GM13977 (cell line): ENCODE measurements at regions of chr18 and their contacts with region 1.

Region 1: GRCh38 chr18:14074187-14074586 is 58.0 kb downstream of the ZNF519 start:
- DNase-seq: no peak
- CTCF ChIP-seq: peak; percentile 20

Region 2: DNA sequence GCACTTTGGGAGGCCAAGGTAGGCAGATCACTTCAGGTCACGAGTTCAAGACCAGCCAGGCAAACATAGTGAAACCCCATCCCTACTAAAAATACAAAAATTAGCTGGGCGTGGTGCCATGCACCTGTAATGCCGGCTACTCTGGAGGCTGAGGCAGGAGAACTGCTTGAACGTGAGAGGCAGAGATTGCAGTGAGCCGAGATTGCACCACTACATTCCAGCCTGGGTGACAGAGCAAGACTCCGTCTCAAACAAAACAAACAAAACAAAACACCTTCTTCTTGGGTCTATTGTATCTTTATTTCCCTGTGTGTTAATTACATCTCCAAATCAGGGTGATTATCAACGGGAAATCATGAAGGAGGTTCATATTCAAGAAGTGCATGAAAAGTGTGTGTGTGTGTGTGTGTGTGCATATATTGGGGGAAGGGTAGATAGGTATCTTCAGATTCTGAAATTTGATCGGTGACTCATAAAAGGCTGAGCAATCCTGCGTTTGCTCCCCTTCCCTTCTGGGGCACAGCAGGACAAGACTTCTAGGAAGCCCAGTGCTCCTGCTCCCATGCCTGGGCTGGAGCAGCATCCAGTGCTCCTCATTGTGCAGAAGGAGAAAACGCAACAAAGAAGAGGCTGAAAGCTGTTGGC is 224.5 kb before region 1 on chr18:
- in situ Hi-C with region 1: loop called (anchors 10 kb)
- DNase-seq: no peak
- CTCF ChIP-seq: no peak